AG04449 (cell line): ENCODE measurements at regions of chr19 and their contacts with region 1.

Region 1: DNA sequence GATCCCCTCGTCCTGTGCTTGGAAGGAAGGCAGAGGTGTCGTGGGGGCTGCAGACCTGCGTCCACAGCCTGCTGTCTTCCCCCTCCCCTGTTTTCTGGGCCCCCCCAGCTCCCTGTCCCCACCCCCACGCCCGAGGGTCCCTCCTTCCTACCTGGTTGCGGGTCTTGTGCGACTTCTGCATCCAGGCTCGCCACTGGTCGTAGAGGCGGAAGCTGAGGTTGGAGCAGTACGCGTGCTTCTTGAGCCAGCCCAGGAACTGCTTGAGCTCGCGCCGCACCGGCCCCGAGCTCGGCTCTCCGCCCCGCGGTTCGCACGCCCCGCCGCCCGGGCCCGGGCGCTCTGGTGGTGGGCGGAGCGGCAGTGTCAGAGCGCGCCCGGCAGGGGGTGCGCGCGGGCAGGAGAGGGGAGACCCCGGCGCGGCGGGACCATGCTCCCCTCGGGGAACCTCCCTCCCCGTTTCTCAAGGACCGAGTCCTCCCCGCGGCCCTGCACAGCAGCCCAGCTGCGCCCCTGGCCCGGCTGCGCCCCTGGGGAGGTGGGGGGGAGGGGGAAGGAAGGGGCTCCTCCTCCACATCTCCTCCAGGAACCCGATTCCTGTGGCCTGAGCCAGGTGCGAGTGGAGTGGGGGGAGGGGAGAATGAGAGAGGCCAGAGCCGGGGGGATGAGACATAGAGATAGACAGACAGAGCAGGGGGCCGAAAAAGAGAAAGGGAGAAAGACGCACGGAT is 5.7 kb downstream of the REX1BD start:
- DNase-seq: no peak
- H3K4me3 ChIP-seq: peak overlapping the region; percentile 48
- CTCF ChIP-seq: peak; percentile 76

Region 2: DNA sequence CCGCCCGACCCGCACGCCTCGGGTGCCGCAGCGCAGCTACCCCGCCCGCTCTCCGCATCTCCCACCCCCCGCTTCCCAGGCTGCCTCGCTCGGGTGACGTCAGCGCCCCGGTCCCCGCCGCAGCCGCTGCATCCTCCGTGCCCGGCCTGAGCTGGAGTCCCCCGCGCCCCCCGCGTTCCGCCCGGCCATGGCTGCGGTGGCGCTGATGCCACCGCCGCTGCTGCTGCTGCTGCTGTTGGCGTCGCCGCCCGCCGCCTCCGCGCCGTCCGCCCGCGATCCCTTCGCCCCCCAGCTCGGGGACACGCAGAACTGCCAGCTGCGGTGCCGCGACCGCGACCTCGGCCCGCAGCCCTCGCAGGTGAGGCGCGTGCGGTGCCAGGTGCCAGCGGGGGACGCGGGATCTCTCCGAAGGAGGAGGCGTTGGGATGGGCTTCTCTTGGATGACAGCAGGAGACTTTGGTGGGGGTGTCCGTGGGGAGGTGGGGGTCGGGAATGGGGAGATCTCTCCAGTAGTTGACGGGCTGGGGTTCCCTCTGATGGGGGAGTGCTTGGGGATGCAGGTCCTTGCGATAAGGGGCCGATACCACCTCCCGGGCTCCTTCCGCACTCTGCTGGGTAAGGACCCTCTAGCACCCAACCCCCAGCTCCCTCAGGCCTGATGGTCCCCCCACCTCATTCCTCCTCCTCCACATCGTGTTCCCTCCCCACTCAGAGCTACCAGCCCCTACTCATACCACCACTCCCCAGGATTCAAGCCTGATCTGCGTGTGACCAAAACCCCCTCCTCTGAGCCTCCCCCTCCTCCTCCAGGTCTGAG is 18.7 kb after region 1 on chr19 and contains the start of gene TMEM59L:
- CTCF ChIA-PET with region 1: interaction called, 16 read pairs
- POLR2A ChIA-PET with region 1: no interaction called
- DNase-seq: no peak
- H3K4me3 ChIP-seq: peak within 1 kb of the TSS; percentile 48
- CTCF ChIP-seq: no peak

Region 3: GRCh38 chr19:18831524-18832305 is 237.5 kb after region 1 on chr19 and contains the start of gene UPF1:
- CTCF ChIA-PET with region 1: interaction called, 16 read pairs
- POLR2A ChIA-PET with region 1: interaction called, 5 read pairs
- DNase-seq: no peak
- H3K4me3 ChIP-seq: peak within 1 kb of the TSS; percentile 87
- CTCF ChIP-seq: no peak